AG04449 (cell line): ENCODE measurements at regions of chr5 and their contacts with region 1.

Region 1: DNA sequence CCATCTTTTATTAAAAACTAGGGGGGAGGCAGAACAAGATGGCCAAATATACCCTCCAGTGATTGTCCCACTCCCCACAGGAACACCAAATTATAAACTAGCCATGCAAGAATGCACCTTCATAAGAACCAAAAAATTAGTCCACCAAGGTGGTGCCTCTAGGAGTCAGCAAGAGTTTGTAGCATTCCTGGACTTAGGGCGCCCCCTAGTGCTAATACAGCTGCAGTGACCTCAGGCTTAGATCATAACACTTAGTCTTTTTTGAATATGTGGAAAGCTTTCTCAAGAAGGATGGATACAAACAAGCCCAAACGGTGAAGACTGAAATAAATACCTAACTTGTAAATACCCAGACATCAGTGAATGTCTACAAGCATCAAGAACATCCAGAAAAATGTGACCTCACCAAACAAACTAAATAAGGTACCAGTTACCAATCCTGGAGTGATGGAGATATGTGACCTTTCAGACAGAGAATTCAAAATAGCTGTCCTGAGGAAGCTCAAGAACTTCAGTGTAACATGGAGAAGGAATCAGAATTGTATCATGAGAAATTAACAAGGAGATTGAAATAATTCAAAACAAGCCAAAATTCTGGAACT is 19.3 kb downstream of the PPIP5K2 start:
- DNase-seq: peak; percentile 9
- H3K4me3 ChIP-seq: no peak overlapping the region
- CTCF ChIP-seq: peak; percentile 88

Region 2: GRCh38 chr5:102536323-102536928 is 602.9 kb before region 1 on chr5:
- CTCF ChIA-PET with region 1: interaction called, 31 read pairs
- POLR2A ChIA-PET with region 1: no interaction called
- DNase-seq: no peak
- H3K4me3 ChIP-seq: no peak overlapping the region
- CTCF ChIP-seq: peak; percentile 7

Region 3: GRCh38 chr5:102583276-102584124 is 555.9 kb before region 1 on chr5:
- CTCF ChIA-PET with region 1: interaction called, 15 read pairs
- POLR2A ChIA-PET with region 1: no interaction called
- DNase-seq: no peak
- H3K4me3 ChIP-seq: no peak overlapping the region
- CTCF ChIP-seq: no peak

Region 4: DNA sequence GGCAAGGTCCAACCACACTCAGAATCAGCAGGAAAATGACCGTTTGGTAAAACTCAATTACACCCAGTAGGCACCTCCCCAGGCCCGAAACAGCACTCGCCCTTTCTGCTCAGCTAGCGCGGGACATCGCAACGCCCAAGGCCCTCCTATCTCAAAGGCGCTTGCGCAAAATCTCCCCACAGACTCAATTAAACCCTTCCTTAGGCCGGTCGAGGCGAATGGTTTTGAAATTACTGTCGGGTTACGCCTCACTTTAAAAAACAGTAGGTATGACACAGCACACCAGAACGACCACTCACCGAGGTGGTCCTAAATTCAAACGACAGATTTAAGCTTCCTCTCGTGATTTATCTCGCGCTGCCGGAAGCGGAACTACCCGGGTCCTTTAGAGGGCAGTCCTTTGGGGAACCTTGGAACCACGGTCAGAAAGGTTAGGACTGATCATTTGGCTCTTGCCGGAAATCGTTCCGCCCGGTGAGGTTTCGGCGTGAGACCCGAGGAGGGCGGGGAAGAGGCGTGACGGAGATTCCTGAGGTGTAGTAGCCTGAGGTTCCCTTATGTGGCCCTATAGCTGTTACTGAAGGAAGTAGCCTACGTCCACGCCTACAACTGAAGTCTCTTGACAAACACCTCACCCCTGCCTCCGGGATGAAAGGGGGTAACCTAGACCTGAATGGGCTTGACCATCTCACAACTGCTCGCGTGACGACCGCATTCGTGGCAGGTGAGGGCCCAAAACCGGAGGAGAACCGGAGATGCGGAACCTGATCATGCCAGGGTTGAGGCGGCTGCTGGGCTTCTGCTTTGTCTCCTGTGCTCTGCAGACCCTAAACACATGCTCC is 19.4 kb before region 1 on chr5 and contains the starts of genes GIN1 and PPIP5K2:
- CTCF ChIA-PET with region 1: interaction called, 19 read pairs
- POLR2A ChIA-PET with region 1: interaction called, 3 read pairs
- DNase-seq: peak; percentile 91
- H3K4me3 ChIP-seq: peak within 1 kb of the TSS; percentile 88
- CTCF ChIP-seq: no peak

Region 5: DNA sequence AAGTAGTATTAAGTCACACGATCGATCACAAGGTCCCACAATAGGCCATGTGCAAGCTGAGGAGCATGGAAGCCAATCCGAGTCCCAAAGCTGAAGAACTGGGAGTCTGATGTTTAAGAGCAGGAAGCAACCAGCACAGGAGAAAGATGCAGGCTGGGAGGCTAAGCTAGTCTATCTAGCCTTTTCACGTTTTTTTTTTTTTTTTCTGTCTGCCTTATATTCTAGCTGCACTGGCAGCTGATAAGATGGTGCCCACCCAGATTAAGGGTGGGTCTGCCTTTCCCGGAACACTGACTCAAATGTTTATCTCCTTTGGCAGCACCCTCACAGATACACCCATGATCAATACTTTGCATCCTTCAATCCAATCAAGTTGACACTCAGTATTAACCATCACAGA is 12.8 kb before region 1 on chr5:
- CTCF ChIA-PET with region 1: interaction called, 54 read pairs
- POLR2A ChIA-PET with region 1: no interaction called
- DNase-seq: no peak
- H3K4me3 ChIP-seq: no peak overlapping the region
- CTCF ChIP-seq: no peak

Region 6: DNA sequence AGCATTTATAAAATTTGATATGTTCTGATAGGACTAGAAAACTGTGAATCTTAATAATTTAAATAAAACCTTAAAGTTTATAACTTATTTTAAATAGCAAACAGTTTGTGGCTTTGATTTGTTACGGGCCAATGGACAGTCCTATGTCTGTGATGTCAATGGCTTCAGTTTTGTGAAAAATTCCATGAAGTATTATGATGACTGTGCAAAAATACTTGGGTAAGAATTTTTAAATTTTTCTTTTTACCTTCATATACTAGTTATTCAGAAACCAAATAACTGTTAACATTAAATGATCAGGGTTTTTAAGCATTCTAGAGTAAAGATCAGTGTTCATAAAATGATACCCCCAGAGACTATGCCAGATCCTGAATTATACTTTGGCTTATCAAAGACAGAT is 11.8 kb after region 1 on chr5:
- CTCF ChIA-PET with region 1: interaction called, 17 read pairs
- POLR2A ChIA-PET with region 1: no interaction called
- DNase-seq: no peak
- H3K4me3 ChIP-seq: no peak overlapping the region
- CTCF ChIP-seq: no peak